BJ (cell line): ENCODE measurements at regions of chr3 and their contacts with region 1.

Region 1: DNA sequence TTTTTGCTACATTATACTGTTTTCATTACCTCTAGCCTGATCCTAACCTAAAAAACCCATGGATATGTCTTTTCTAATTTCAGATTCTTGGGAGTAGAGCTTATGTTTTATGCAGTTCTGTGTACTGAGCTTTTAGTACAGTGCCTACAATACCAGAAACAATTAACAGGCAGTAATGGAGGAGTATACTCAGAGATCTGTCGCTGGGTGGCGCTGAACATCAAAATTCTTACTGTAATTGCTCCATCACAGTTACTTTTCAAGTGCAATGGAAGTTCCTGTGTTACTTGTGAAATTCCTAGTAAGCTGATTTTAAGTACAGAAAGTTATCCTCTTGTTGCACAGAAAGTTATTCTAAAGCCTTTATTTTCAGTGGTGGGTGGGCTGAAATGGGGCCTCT is 66.9 kb downstream of the RNF13 start:
- DNase-seq: peak; percentile 19
- H3K4me3 ChIP-seq: no peak overlapping the region
- H3K27me3 ChIP-seq: no peaks in the 10 kb centered on the region
- CTCF ChIP-seq: peak; percentile 67

Region 2: DNA sequence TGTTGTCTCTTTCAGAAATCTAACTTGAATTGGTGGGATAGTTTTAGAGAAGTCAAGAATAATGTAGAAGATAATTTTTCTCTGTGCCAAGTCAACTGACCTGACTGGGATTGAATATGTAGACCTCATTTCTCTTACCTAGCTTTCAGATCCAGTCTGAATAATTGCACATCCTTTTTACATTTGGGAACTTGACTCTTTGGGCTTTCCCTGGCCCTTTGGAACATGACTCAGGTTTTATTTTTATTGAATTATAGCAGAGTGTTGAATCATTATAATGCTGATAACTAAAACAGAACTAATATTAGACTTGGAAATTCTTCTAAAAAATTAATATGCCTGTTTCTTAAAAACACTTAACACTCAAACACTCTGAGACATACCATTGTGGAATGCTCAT is 14.3 kb after region 1 on chr3:
- CTCF ChIA-PET with region 1: interaction called, 10 read pairs
- POLR2A ChIA-PET with region 1: no interaction called
- DNase-seq: no peak
- H3K4me3 ChIP-seq: no peak overlapping the region
- H3K27me3 ChIP-seq: no peaks in the 10 kb centered on the region
- CTCF ChIP-seq: no peak

Region 3: DNA sequence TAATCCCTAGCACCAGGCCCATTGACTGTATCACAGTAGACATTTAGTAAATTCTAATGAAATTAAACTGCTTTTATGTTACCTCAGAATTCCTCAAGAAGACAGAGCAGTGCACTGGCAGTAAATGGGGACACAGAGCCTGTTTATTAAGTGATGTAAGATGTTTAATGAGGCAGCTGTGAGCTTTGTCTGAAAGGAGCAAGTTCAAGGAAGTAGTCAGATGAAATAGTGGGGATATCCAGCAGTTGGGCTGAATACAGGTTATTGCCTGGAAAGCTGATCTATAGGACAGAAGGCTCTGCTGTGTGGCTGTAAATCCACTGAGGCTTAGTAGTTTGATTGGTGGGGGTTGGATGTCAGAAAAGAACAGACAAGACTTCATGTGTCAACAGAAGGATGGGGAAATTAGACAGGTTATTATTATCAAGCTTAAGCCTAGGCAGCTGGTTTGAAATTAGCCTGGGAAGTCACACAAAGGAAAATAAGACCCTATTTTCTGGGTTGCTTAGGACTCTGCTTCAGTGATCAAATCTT is 28.6 kb after region 1 on chr3:
- CTCF ChIA-PET with region 1: interaction called, 22 read pairs
- POLR2A ChIA-PET with region 1: no interaction called
- DNase-seq: no peak
- H3K4me3 ChIP-seq: no peak overlapping the region
- H3K27me3 ChIP-seq: no peaks in the 10 kb centered on the region
- CTCF ChIP-seq: no peak